Adrenal gland (tissue), 19 donors: ENCODE measurements at regions of chr20 and their contacts with region 1.

Region 1: GRCh38 chr20:57346477-57346876 is 4.6 kb upstream of the RAE1 start:
- DNase-seq: peak; percentile 58 to 94 (median 80)
- H3K4me3 ChIP-seq: no peak overlapping the region
- H3K27ac ChIP-seq: no peak overlapping the region
- H3K4me1 ChIP-seq: no peaks in the 10 kb centered on the region
- H3K27me3 ChIP-seq: no peaks in the 10 kb centered on the region
- CTCF ChIP-seq: peak; percentile 48 to 78 (median 72)
- POLR2A ChIP-seq: no peak

Region 2: GRCh38 chr20:57089691-57090150 is 256.8 kb before region 1 on chr20:
- intact Hi-C with region 1: loop called (anchors 2 to 5 kb)
- DNase-seq: peak; percentile 46 to 77 (median 63)
- H3K4me3 ChIP-seq: no peak overlapping the region
- H3K27ac ChIP-seq: no peak overlapping the region
- H3K4me1 ChIP-seq: no peaks in the 10 kb centered on the region
- H3K27me3 ChIP-seq: peaks cover 11% of the 10 kb centered on the region
- CTCF ChIP-seq: peak; percentile 61 to 80 (median 70)
- POLR2A ChIP-seq: no peak

Region 3: DNA sequence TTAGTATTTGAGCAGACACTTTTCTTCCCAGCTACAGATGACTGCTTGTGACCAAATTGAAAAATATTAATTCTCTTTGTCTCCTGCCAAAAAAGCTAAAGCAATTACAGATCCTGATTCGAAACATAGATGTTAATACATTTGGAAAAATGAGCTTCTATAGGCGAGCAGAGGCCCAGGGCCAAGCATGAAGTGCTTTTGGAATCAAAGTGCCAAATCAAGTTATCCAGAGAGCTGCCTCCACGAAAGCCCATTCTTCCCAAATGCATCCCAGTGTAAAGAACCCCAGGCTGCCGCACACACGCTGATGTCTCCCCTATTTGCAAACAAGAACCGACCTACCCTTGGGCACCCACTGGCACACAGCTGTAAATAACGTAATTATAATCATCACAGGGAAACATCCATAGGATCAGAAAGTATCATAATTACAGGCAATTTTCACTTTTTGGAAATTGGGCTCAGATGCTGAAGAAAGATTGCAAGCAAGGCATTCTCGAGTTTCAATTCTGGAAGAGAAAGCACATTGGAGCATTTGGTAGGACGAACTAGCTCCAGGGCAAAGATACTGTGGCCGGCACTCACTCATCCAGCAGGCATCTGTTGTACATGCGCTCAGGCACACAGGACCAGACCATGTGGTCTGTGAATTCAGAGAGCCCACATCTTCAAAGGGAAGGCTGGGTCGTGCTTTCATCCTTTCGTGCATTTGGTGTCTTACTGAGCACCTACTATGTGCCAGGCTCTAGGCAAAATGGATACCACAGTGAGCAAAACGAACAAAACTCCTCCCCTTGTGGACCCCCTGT is 125.9 kb before region 1 on chr20:
- intact Hi-C with region 1: no loop called
- DNase-seq: no peak
- H3K4me3 ChIP-seq: no peak overlapping the region
- H3K27ac ChIP-seq: no peak overlapping the region
- H3K4me1 ChIP-seq: no peaks in the 10 kb centered on the region
- H3K27me3 ChIP-seq: no peaks in the 10 kb centered on the region
- CTCF ChIP-seq: no peak
- POLR2A ChIP-seq: no peak